ENCODE measurements at regions of chr2 and their contacts with region 1.

Region 1: DNA sequence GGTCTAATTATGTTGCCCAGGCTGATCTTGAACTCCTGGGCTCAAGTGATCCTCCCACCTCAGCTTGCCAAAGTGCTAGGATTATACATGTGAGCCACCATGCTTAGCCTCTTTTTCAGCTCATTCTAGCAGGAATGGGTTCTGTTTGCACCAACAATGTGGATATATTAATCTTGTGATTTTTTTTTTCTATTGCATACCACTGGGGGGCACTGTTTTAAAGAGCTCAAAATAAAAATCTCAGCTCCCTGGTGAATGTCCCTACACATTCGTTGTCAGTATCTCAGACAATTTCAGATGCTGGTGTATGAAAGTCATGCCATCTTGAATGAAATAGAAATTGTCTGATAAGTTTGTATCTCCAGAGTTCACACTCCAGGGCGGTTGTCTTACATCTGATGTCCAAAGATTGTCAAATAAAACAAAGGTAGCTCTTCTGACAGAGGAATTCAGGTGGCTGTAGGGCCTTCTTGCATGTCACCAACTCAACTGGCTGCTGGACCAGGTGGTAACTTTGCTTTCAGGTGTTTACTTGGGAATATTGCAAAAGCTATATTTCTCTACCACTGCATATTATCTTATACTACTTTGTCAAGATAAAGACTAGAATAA is 3.1 kb upstream of the MATN3 start:
- DNase-seq: no peak
- H3K4me3 Mint-ChIP-seq: no peak overlapping the region
- H3K27ac Mint-ChIP-seq: no peak overlapping the region
- H3K4me1 Mint-ChIP-seq: peaks cover 6% of the 10 kb centered on the region
- H3K27me3 Mint-ChIP-seq: peaks cover 22% of the 10 kb centered on the region

Region 2: DNA sequence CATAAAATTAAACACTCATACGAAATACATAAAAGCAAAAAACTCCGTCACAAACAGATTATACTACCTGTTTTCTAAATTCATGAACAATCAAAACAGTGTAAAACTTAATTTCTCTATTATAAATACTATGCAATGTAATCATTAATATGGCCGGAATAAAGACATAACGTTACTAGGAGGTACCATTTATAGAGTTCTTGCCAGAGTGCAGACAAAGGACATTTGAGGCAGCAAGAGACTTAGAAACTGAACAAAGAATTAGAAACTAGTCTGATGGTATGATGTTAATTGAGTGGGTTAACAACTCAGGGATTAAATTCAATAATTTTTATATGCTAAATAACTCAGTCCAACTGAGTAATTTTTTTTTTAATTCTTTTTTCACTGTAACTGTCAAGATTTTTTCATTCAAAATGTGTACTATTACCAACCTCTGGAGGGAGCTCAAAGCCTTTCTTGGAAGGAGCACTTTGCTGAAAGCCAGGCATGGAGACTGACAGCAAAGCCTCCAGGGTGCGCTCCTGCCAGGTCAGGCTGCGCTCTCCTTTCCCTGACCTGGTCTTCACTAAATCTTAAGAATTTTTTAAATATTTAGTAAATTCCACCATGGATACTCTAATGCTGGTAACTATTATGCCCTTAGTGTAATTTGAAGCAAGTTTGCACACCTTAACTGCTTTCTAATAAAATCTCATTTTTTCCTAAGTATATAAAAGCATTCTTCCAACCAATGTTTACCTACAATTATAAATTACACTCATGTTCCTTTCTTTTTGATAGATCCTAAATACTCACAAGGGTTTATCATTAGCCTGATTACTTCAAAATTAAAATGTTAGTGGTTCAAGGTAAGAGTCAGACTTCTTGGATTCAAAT is 59.8 kb before region 1 on chr2:
- CTCF ChIA-PET with region 1: interaction called, 4 read pairs
- POLR2A ChIA-PET with region 1: no interaction called
- intact Hi-C with region 1: loop called (anchors 5 kb)
- DNase-seq: peak; percentile 51
- H3K4me3 Mint-ChIP-seq: no peak overlapping the region
- H3K27ac Mint-ChIP-seq: no peak overlapping the region
- H3K4me1 Mint-ChIP-seq: no peaks in the 10 kb centered on the region
- H3K27me3 Mint-ChIP-seq: no peaks in the 10 kb centered on the region

Region 3: GRCh38 chr2:20035955-20036666 is 20.5 kb after region 1 on chr2:
- CTCF ChIA-PET with region 1: interaction called, 12 read pairs
- POLR2A ChIA-PET with region 1: no interaction called
- intact Hi-C with region 1: no loop called
- DNase-seq: no peak
- H3K4me3 Mint-ChIP-seq: no peak overlapping the region
- H3K27ac Mint-ChIP-seq: no peak overlapping the region
- H3K4me1 Mint-ChIP-seq: no peaks in the 10 kb centered on the region
- H3K27me3 Mint-ChIP-seq: no peaks in the 10 kb centered on the region

Region 4: DNA sequence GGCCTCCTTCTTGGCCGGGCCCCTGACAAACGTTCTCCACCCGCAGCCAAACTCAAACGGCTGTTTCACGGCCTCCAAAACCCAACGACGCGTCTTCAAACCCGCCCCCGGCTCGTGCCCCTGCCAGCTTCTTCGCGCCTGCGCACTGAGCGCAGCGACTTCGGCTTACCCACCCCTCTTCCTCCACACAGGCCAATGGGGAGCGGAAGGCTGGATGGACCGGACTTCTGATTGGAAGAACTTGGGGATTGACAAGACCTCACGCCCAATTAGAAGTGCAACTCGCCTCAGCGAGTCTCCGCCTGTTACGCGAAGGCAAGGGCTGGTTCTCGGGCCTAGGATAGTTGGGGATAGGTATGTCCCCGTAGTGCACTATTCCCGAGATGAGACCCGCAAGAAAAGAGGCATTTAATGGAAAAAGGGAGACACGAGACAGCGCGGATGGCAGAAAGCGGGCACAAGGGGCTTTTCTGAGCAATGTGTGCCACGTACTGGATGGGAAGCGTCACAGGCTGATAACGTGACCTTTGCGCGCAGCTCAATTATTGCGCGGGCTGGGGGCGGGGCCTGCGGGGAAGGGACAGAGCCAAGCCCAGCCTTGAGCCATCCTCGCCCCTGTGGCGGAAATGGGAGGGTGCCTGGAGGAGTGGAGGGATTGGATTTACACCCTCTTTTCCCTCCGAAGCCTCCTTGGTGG is 36.1 kb after region 1 on chr2 and contains the start of gene LAPTM4A:
- CTCF ChIA-PET with region 1: interaction called, 8 read pairs
- POLR2A ChIA-PET with region 1: interaction called, 3 read pairs
- intact Hi-C with region 1: loop called (anchors 1 kb)
- DNase-seq: peak; percentile 99
- H3K4me3 Mint-ChIP-seq: no peak within 1 kb of the TSS
- H3K27ac Mint-ChIP-seq: no peak within 1 kb of the TSS
- H3K4me1 Mint-ChIP-seq: peaks cover 28% of the 10 kb centered on the region
- H3K27me3 Mint-ChIP-seq: peaks cover 11% of the 10 kb centered on the region
- total RNA-seq, gene LAPTM4A: 26.7 to 29.0 TPM

Region 5: DNA sequence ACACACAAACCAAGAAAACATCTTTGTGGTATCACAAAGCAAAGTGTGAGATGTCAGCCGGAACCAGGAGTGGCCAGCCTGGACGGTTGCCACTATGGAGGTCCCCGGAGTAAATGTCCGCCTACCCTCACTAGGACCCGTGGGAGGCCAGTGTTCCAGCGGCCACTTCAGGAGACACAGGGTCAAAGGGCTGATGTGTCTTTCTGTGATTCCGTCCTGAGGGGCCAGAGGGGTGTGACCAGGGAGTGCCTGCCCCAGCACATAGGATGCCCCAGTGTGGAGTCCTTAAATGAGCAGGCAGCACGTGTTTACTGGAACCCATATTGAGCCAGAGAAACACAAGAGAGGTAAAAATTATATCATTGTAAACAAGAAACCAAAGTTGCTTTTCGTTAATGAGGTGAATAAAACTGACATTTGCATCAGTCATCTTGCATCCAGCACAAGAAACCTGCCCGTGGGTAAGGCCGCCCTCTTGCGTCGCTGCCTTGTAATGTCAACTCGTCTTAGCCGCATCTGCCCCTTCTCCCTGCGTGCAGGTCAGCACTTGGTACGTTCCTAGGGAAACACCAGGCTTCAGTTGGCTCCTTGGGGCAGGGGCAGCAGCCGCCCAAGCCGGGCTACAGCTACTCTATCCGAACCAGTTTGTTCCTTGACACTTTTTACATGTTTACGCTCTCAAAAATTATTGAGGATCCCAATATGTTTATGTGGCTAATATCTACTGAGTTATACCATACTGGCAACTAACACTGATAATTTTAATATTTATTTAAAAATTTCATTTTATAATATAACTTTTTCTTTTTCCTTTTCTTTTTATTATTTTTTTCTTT is 82.5 kb after region 1 on chr2:
- CTCF ChIA-PET with region 1: interaction called, 27 read pairs
- POLR2A ChIA-PET with region 1: no interaction called
- intact Hi-C with region 1: loop called (anchors 1 kb)
- DNase-seq: peak; percentile 87
- H3K4me3 Mint-ChIP-seq: no peak overlapping the region
- H3K27ac Mint-ChIP-seq: no peak overlapping the region
- H3K4me1 Mint-ChIP-seq: peaks cover 2% of the 10 kb centered on the region
- H3K27me3 Mint-ChIP-seq: peaks cover 1% of the 10 kb centered on the region